Right lobe of liver (tissue), 6 donors: ENCODE measurements at regions of chr14 and their contacts with region 1.

Region 1: GRCh38 chr14:67934008-67934481 is 114.5 kb downstream of the RAD51B start:
- DNase-seq: no peak
- ATAC-seq: peak; percentile 95 to 99 (median 97)
- H3K4me3 ChIP-seq: no peak overlapping the region
- H3K27ac ChIP-seq: peak overlapping the region in 1 of 3 donors; percentile 29
- H3K4me1 ChIP-seq: no peaks in the 10 kb centered on the region
- H3K27me3 ChIP-seq: no peaks in the 10 kb centered on the region
- CTCF ChIP-seq: peak; percentile 62 to 79 (median 71)
- POLR2A ChIP-seq: no peak

Region 2: DNA sequence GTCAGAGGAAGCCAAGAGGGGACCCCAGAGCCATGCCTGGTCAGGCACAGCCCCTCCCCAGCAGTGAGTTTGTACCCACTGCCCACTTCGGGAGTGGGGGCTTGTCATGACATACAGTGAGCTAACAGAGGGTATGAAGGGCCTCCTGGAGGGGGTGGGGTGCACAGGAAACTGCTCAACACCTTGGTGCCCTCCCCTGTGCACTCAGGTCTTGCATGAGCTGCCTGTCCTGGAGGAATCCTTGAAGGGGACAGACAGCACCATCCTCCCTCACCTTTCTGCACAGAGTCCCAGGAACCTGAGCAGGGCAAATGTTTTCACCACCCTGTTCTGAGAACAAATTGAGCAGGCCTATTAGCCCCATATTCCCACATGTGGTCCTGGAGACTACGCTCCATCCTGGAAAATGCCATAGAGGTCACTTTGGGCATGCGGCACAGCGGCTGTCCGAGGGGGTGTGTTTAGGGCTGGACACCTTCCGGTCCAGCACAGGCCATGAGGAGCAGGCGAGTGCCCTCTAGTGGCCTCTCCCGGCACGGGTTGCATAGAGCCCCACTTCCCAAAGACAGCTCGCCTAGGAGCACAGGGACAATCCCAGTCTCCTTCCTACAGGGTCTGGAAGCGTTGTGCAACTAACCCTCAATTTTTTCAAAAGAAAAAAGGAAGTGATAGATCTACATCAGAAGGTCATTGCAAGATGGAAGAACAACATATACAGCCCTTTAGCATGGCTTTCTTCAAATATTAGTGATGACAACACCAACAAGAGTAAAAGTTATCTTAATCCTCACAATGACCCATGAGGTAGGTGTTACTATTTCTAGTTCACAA is 890.7 kb after region 1 on chr14:
- intact Hi-C with region 1: loop called in 1 of 2 experiments (anchors 10 kb)
- DNase-seq: peak; percentile 91 to 96 (median 95)
- ATAC-seq: peak; percentile 65 to 83 (median 70)
- H3K4me3 ChIP-seq: peak overlapping the region; percentile 10 to 43 (median 12)
- H3K27ac ChIP-seq: peak overlapping the region; percentile 73 to 99 (median 79)
- H3K4me1 ChIP-seq: peaks cover 0 to 67% (median 31%) of the 10 kb centered on the region in 4 donors
- H3K27me3 ChIP-seq: no peaks in the 10 kb centered on the region
- CTCF ChIP-seq: peak; percentile 90 to 98 (median 96)
- POLR2A ChIP-seq: peak; percentile 56